Transverse colon (tissue), 4 donors: ENCODE measurements at regions of chr17 and their contacts with region 1.

Region 1: GRCh38 chr17:11950771-11951519 is 46.3 kb downstream of the ZNF18 start:
- DNase-seq: no peak
- H3K4me3 ChIP-seq: no peak overlapping the region
- H3K27ac ChIP-seq: no peak overlapping the region
- H3K4me1 ChIP-seq: no peaks in the 10 kb centered on the region
- H3K27me3 ChIP-seq: no peaks in the 10 kb centered on the region
- CTCF ChIP-seq: no peak
- EP300 ChIP-seq: no peak
- POLR2A ChIP-seq: no peak

Region 2: GRCh38 chr17:10251212-10251948 is 1699.6 kb before region 1 on chr17:
- in situ Hi-C with region 1: no loop called
- intact Hi-C with region 1: loop called (anchors 10 kb)
- DNase-seq: no peak
- H3K4me3 ChIP-seq: no peak overlapping the region
- H3K27ac ChIP-seq: no peak overlapping the region
- H3K4me1 ChIP-seq: no peaks in the 10 kb centered on the region
- H3K27me3 ChIP-seq: no peaks in the 10 kb centered on the region
- CTCF ChIP-seq: no peak
- EP300 ChIP-seq: no peak
- POLR2A ChIP-seq: no peak

Region 3: DNA sequence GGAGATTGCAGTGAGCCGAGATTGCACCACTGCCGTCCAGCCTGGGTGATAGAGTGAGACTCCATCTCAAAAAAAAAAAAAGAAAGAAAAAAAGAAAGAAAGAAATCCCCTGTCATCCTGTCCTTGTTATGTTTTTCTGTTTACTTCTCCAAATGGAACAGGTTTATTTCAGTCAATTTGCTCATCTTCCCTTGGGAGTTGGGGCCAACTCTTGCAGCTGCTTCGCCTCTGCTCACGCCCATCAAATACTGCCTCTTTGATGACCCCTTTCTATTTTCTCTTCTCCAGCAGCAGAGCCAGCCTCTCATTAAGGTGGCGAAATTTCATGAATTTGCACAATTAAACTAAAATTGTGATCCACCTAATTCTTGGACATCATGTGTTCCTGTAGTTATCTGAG is 127.1 kb before region 1 on chr17:
- in situ Hi-C with region 1: loop called in 1 of 4 experiments (anchors 25 kb)
- intact Hi-C with region 1: no loop called
- DNase-seq: no peak
- H3K4me3 ChIP-seq: no peak overlapping the region
- H3K27ac ChIP-seq: no peak overlapping the region
- H3K4me1 ChIP-seq: peaks cover 0 to 3% (median 0%) of the 10 kb centered on the region in 4 donors
- H3K27me3 ChIP-seq: no peaks in the 10 kb centered on the region
- CTCF ChIP-seq: no peak
- EP300 ChIP-seq: no peak
- POLR2A ChIP-seq: no peak

Region 4: GRCh38 chr17:11893862-11894261 is 57.1 kb before region 1 on chr17:
- in situ Hi-C with region 1: no loop called
- intact Hi-C with region 1: loop called (anchors 5 kb)
- DNase-seq: no peak
- H3K4me3 ChIP-seq: no peak overlapping the region
- H3K27ac ChIP-seq: no peak overlapping the region
- H3K4me1 ChIP-seq: no peaks in the 10 kb centered on the region
- H3K27me3 ChIP-seq: no peaks in the 10 kb centered on the region
- CTCF ChIP-seq: no peak
- EP300 ChIP-seq: no peak
- POLR2A ChIP-seq: no peak